Gastrocnemius medialis (tissue), 4 donors: ENCODE measurements at regions of chr7 and their contacts with region 1.

Region 1: DNA sequence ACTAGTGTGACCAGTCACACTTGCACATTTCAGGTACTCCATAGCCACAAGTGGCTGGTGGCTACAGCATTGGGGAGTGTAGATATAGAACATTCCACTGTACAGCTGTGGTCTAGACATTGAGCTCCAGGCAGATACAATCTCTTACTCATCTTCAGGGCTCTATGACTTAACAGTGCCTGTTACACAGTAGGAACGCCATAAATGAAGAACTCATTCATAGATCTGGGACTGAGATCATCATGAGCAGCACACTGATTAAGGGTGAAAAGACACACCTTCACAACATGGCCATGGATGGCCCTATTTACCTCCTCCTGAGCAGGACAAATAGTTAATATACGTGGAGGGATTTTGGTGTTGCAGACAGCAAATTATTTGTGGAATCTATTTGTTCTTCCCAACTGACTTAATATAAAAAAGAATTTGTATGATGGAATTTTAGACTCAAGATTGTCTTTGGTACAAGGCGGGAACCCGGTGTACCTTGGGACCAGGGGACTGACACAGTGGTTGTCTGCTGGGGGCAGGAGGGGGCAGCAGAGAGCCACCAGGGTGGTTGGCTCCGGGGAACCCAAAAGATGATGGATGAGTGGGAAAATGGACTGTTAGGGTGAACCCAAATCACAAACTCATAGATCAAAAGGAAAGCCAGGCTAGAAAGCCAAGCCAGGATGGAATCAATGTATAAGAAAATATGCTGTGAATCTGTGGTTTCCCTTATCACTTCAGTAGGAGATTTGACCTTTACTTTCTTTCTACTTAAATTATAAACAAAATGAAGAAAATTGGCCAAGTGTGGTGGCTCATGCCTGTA is 24.3 kb upstream of the CPA2 start:
- DNase-seq: peak; percentile 3 to 33
- ATAC-seq: no peak
- H3K4me3 ChIP-seq: no peak overlapping the region
- H3K27ac ChIP-seq: no peak overlapping the region
- H3K4me1 ChIP-seq: no peaks in the 10 kb centered on the region
- H3K27me3 ChIP-seq: no peaks in the 10 kb centered on the region
- CTCF ChIP-seq: peak; percentile 60 to 80 (median 68)
- POLR2A ChIP-seq: no peak

Region 2: DNA sequence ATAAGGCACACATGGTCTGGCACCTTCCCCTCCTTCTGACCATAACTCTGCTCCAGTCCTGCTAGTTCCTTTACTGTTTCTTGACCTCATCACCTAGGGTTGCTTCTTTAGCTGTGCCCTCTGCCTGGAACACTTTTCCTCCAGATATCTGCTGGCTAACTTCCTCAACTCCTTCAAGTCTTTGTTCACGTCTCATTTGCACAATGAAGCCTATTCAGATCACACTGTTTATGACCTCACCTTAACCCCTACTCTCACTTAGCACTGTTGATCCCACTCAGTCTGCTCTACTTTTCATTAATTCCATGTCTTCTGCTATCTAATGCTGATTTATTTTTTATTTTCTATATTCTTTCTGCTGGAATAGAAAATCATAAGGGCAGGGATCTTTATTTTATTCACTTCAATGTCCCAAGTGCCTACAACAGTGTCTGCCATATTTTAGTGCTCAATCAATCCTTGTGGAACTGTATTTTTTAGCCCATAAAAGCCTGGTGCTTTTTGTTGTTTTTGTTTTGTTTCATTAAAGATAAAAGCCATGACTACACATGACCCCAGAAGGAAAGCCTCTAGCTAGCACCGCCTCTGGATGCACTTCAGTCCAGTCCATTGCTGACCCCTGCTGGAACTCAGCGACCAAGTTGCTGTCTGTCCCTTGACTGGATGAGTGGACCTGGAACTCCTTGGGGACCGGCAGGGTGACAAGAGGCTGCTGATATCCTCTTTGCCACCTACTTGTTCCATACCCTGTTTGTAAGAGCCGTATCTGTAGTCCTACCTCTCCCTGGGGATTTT is 479.3 kb after region 1 on chr7:
- in situ Hi-C with region 1: loop called in 2 of 4 experiments (anchors 25 kb)
- intact Hi-C with region 1: loop called (anchors 1 kb)
- DNase-seq: peak; percentile 34 to 48
- ATAC-seq: peak; percentile 46 to 69
- H3K4me3 ChIP-seq: no peak overlapping the region
- H3K27ac ChIP-seq: no peak overlapping the region
- H3K4me1 ChIP-seq: no peaks in the 10 kb centered on the region
- H3K27me3 ChIP-seq: no peaks in the 10 kb centered on the region
- CTCF ChIP-seq: peak in 4 of 5 experiments; percentile 35 to 66 (median 52)
- POLR2A ChIP-seq: no peak

Region 3: DNA sequence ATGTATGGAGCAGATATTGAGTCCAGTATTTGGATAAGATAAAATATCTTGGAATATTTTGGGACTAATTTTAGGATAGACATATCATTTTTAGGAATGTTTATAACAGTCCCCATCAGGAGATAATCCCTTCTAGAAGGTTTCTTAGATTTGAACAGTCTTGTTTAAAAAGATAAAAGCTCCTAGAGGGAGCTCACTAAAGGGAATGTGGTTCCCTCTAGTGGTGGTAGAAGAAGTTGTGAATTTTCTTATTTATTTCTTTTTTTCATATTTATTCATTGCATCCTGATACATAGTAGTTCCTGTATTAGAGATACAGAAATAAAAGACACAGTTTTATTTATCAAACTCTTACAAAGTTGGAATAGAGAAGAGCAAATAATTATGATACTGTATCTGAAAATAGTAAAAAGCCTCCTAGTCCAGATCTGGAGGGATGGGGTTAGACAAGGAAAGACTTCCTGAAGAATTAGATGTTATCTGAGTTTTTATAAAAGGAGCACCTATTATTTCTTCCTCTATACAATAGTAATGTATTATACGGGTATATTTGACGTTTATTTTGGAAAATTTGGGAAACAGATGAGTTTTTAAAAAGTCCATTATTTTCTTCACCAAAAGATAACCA is 516.1 kb after region 1 on chr7:
- in situ Hi-C with region 1: loop called in 1 of 4 experiments (anchors 25 kb)
- intact Hi-C with region 1: no loop called
- DNase-seq: no peak
- ATAC-seq: peak in 1 of 2 donors; percentile 36
- H3K4me3 ChIP-seq: no peak overlapping the region
- H3K27ac ChIP-seq: no peak overlapping the region
- H3K4me1 ChIP-seq: no peaks in the 10 kb centered on the region
- H3K27me3 ChIP-seq: no peaks in the 10 kb centered on the region
- CTCF ChIP-seq: peak in 4 of 5 experiments; percentile 33 to 73 (median 46)
- POLR2A ChIP-seq: no peak

Region 4: GRCh38 chr7:130831817-130832481 is 589.5 kb after region 1 on chr7:
- in situ Hi-C with region 1: no loop called
- intact Hi-C with region 1: loop called (anchors 2 kb)
- DNase-seq: no peak
- ATAC-seq: peak in 1 of 2 donors; percentile 34
- H3K4me3 ChIP-seq: no peak overlapping the region
- H3K27ac ChIP-seq: no peak overlapping the region
- H3K4me1 ChIP-seq: peaks cover 0 to 10% of the 10 kb centered on the region in 2 donors
- H3K27me3 ChIP-seq: no peaks in the 10 kb centered on the region
- CTCF ChIP-seq: peak; percentile 50 to 73 (median 71)
- POLR2A ChIP-seq: no peak